ENCODE measurements at regions of chr22 and their contacts with region 1.

Region 1: GRCh38 chr22:20957316-20958101 is 9.5 kb upstream of the AIFM3 start:
- DNase-seq: no peak
- ATAC-seq: peak; percentile 66
- H3K4me3 ChIP-seq: peak overlapping the region; percentile 81 to 98
- H3K27ac ChIP-seq: peak overlapping the region; percentile 96
- H3K4me1 ChIP-seq: peaks cover 15 to 41% of the 10 kb centered on the region in 2 experiments
- H3K27me3 ChIP-seq: no peaks in the 10 kb centered on the region
- CTCF ChIP-seq: no peak
- POLR2A ChIP-seq: peak; percentile 51
- RAD21 ChIP-seq: no peak

Region 2: DNA sequence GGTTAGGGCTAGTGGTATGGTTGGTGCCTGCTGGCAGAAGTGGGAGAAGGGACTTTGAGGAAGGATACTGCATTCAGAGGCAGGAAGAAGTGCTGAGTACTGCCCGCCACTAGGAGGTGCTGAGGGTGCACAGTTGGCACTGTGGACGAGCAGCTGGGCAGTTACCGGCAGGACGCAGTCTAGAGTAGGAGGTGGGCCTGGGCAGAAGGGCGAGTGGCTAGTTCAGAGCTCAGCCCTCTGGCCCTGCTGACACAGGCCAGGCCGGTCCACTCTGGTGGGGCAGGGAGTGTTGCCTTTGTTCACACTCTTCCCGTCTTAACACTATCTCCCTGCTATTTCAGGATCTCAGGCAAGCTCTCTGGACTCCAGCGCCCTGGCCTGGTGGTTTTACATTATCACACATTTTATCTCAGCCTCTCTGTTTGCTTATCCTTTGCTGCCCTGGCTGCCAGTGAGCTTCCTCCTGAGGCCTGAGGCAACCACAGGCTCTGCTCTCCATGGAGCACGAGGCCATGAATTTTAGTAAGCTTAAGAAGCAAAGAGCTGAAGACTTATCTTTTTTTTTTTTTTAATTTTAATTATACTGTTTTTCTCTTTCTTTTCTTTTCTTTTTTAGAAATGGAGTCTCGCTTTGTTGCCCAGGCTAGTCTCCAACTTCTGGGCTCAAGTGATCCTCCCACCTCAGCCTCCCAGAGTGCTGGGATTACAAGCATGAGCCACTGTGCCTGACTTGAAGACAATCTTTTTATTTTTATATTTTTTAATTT is 71.8 kb before region 1 on chr22:
- CTCF ChIA-PET with region 1: interaction called, 21 read pairs
- POLR2A ChIA-PET with region 1: interaction called, 4 read pairs
- RAD21 ChIA-PET with region 1: interaction called, 3 to 5 read pairs
- intact Hi-C with region 1: loop called (anchors 1 kb)
- DNase-seq: peak; percentile 58
- ATAC-seq: peak; percentile 100
- H3K4me3 ChIP-seq: no peak overlapping the region
- H3K27ac ChIP-seq: peak overlapping the region; percentile 39
- H3K4me1 ChIP-seq: peaks cover 3 to 17% of the 10 kb centered on the region in 2 experiments; a peak in 3 of 4 replicates
- H3K27me3 ChIP-seq: no peaks in the 10 kb centered on the region
- CTCF ChIP-seq: peak; percentile 91 to 97 (median 95)
- POLR2A ChIP-seq: no peak
- RAD21 ChIP-seq: peak; percentile 94

Region 3: DNA sequence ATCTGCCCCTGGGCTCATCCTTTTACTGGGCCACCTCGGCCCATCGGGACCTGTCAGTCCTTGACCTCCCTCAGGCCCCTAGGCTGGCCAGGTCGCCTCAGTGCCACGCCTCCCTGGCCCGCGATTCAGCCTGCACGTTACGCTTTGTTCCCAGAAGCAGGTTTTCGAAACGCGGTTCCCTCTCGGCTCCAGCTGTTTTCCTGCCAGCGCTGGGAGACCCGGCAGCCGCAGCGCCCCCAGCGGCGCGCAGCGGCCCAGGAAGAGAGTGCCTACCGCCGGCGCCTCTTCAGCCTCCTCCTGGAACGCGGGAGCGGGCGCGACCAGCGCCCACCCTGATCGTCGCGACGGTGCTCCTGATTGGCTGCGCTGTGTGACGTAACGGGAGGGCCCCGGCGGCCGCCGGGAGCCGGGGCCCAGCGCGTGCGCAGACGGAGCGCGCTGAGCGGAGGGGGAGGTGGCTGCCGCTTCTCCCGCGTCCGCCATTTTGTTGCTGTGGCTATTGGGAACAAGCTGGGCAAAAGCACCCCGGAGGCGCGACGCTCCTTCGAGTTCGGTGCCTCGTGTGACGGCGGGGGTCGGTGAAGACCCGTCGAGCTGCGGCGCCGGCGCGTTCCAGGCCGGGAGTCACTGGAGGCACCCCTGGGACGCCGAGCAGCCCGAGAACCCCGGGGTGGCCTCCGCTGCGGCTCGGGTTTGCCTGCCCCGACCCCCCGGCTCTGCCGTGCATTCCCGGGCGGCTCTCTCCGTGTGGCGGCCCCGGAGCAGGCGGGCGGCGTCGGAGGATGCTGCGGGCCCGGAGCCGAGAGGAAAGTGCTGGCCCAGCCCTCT is 40.3 kb before region 1 on chr22 and contains the start of gene CRKL:
- CTCF ChIA-PET with region 1: interaction called, 7 read pairs
- POLR2A ChIA-PET with region 1: interaction called, 3 read pairs
- RAD21 ChIA-PET with region 1: no interaction called
- intact Hi-C with region 1: loop called (anchors 5 kb)
- DNase-seq: peak; percentile 94
- ATAC-seq: peak; percentile 99
- H3K4me3 ChIP-seq: peak within 1 kb of the TSS; percentile 97 to 100
- H3K27ac ChIP-seq: peak within 1 kb of the TSS; percentile 98
- H3K4me1 ChIP-seq: peaks cover 17 to 40% of the 10 kb centered on the region in 2 experiments; a peak in 3 of 4 replicates
- H3K27me3 ChIP-seq: no peaks in the 10 kb centered on the region
- CTCF ChIP-seq: peak; percentile 70 to 98 (median 90)
- POLR2A ChIP-seq: peak; percentile 35
- RAD21 ChIP-seq: peak; percentile 48
- total RNA-seq, gene CRKL: 87.7 TPM

Region 4: DNA sequence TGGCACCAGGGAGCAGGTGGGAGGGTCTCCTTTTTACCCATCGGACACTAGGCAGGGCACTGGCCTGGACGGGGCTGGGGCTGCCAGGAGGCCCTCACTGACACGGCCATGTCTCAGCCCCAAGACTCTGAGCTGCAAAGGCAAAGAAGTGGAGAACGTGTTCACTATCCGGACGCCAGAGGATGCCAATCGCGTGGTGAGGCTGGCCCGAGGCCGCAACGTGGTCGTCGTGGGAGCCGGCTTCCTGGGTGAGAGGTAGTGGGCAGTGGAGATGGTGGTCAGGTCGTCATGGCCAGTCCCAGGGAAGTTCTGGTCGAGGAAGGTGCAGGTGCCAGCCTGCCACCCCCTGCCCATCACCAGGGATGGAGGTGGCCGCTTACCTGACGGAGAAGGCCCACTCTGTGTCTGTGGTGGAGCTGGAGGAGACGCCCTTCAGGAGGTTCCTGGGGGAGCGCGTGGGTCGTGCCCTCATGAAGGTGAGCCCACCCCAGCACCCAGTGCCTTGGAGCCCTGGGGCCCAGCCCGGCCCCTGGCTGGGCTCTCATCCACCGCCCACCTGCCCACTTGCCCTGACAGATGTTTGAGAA is 18.9 kb after region 1 on chr22:
- CTCF ChIA-PET with region 1: interaction called, 5 read pairs
- POLR2A ChIA-PET with region 1: interaction called, 10 read pairs
- RAD21 ChIA-PET with region 1: no interaction called
- intact Hi-C with region 1: no loop called
- DNase-seq: no peak
- ATAC-seq: no peak
- H3K4me3 ChIP-seq: no peak overlapping the region
- H3K27ac ChIP-seq: no peak overlapping the region
- H3K4me1 ChIP-seq: peaks cover 3 to 12% of the 10 kb centered on the region in 2 experiments; a peak in 2 of 4 replicates
- H3K27me3 ChIP-seq: no peaks in the 10 kb centered on the region
- CTCF ChIP-seq: no peak
- POLR2A ChIP-seq: no peak
- RAD21 ChIP-seq: no peak

Region 5: DNA sequence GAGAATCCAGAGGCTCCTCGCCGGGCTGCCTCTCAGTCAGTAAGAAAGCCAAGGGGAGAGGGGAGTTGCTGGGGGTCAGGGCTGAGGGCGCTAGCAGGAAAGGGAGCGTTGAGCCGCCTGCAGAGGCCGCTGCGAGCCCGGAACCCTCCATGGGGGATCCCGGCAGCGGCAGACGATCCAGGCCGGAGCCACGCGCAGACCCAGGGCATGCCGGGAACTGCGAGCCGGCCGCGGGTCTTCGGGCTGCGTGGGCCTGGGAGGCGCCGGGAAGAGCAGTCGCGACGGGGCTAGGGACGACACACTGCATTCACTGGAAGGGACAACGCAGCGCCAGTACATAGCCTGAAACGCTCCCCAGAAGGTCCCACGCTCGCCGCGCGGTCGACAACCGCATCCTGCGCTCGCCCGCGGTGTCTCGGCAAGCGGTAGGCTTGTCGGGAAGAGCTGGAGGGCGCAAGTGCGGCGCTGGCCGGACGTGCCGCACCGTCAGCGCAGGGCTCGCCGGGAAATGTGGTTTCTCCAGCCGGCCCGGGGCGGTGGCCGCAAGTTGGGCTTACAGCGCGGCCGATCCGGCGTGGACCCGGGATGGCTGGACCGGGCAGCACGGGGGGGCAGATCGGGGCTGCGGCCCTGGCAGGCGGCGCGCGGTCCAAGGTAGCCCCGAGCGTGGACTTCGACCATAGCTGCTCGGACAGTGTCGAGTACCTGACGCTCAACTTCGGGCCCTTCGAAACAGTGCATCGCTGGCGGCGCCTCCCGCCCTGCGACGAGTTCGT is 24.5 kb after region 1 on chr22 and contains the start of gene LZTR1:
- CTCF ChIA-PET with region 1: interaction called, 7 read pairs
- POLR2A ChIA-PET with region 1: interaction called, 21 read pairs
- RAD21 ChIA-PET with region 1: interaction called in 1 of 2 experiments, 3 read pairs
- intact Hi-C with region 1: no loop called
- DNase-seq: peak; percentile 50
- ATAC-seq: peak; percentile 95
- H3K4me3 ChIP-seq: peak within 1 kb of the TSS; percentile 77 to 89
- H3K27ac ChIP-seq: peak within 1 kb of the TSS; percentile 80
- H3K4me1 ChIP-seq: peaks cover 6 to 18% of the 10 kb centered on the region in 2 experiments; a peak in 2 of 4 replicates
- H3K27me3 ChIP-seq: no peaks in the 10 kb centered on the region
- CTCF ChIP-seq: peak; percentile 48 to 68 (median 56); a peak in 5 of 6 replicates
- POLR2A ChIP-seq: peak; percentile 97
- RAD21 ChIP-seq: peak; percentile 39
- total RNA-seq, gene LZTR1: 56.5 TPM